Activated CD4-positive, alpha-beta memory T cell treated with anti-CD3 and anti-CD28 coated beads for 36 hours (primary cell): ENCODE measurements at regions of chr3 and their contacts with region 1.

Region 1: DNA sequence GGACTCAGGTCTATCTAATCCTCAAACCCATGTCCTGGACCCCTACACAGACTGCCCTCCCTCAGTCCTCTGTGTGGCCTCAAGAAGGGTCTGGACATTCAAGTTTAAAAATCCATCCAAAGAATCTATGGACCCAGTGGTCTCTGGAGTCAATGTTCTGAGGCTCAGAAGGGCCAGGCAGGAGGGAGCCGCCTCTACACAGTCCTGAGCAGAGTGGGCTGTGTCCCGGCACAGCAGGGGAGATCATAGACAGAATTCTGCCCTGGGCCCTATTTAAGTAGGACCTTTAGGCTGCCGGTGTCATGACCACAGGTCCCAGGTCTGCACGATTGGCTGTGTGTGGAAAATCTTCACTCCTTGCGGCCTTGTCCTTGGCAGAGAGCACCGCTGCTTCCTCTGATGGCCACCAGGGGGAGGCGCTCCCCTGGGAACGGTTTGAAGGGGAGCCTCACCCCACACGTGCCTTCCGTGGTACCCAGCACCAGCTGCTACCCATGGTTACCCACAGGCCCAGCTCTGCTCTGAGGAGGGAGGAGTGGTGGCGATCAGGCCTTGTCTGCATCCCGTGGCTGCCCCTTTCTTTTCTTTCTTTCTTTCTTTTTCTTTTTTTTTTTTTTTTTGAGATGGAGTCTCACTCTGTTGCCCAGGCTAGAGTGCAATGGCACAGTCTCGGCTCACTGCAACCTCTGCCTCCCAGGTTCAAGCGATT is 37.9 kb downstream of the CHRD start:
- DNase-seq: peak; percentile 79
- H3K4me3 Mint-ChIP-seq: no peak overlapping the region
- H3K27ac Mint-ChIP-seq: no peak overlapping the region
- H3K4me1 Mint-ChIP-seq: no peaks in the 10 kb centered on the region
- H3K27me3 Mint-ChIP-seq: no peaks in the 10 kb centered on the region

Region 2: GRCh38 chr3:183285828-183286457 is 1131.8 kb before region 1 on chr3:
- CTCF ChIA-PET with region 1: no interaction called
- POLR2A ChIA-PET with region 1: no interaction called
- intact Hi-C with region 1: no loop called
- DNase-seq: peak; percentile 97
- H3K4me3 Mint-ChIP-seq: peak overlapping the region; percentile 71
- H3K27ac Mint-ChIP-seq: peak overlapping the region; percentile 98
- H3K4me1 Mint-ChIP-seq: peaks cover 39% of the 10 kb centered on the region
- H3K27me3 Mint-ChIP-seq: no peaks in the 10 kb centered on the region

Region 3: GRCh38 chr3:184469423-184469822 is 51.6 kb after region 1 on chr3:
- CTCF ChIA-PET with region 1: interaction called, 5 read pairs
- POLR2A ChIA-PET with region 1: no interaction called
- intact Hi-C with region 1: loop called (anchors 2 kb)
- DNase-seq: peak; percentile 64
- H3K4me3 Mint-ChIP-seq: no peak overlapping the region
- H3K27ac Mint-ChIP-seq: no peak overlapping the region
- H3K4me1 Mint-ChIP-seq: peaks cover 6% of the 10 kb centered on the region
- H3K27me3 Mint-ChIP-seq: peaks cover 20% of the 10 kb centered on the region

Region 4: DNA sequence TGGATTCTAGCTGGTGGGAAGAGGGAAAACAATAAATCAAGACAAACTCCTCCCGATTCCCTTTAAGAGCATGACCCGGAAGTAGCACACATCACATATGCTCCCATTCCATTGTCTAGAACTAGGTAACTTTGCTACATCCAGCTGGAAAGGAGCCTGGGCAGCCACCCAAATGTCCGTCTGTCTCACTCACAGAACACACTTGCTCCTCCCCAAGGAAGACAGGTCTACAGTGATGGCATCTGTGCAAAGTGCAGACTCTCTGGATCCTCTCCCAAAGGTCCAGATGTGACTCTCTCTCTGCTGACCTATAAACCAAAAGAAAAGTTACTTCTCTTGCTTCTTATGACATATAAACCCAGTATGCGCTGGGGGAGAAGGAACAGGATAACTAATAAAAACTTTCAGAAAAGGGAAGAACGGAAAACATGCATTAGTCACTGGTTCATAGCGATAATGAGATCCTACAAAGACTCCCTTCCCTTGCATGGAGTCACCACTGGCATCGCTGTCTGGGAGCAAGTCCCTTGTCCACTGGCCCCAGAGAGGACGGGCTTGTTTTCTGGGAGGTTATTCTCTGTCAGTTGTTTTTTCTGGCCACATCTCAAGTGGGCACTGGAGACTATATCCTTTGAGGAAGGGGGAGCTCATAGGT is 114.0 kb after region 1 on chr3:
- CTCF ChIA-PET with region 1: no interaction called
- POLR2A ChIA-PET with region 1: no interaction called
- intact Hi-C with region 1: no loop called
- DNase-seq: no peak
- H3K4me3 Mint-ChIP-seq: no peak overlapping the region
- H3K27ac Mint-ChIP-seq: no peak overlapping the region
- H3K4me1 Mint-ChIP-seq: no peaks in the 10 kb centered on the region
- H3K27me3 Mint-ChIP-seq: peaks cover 19% of the 10 kb centered on the region